Sigmoid colon (tissue), 7 donors: ENCODE measurements at regions of chr13 and their contacts with region 1.

Region 1: DNA sequence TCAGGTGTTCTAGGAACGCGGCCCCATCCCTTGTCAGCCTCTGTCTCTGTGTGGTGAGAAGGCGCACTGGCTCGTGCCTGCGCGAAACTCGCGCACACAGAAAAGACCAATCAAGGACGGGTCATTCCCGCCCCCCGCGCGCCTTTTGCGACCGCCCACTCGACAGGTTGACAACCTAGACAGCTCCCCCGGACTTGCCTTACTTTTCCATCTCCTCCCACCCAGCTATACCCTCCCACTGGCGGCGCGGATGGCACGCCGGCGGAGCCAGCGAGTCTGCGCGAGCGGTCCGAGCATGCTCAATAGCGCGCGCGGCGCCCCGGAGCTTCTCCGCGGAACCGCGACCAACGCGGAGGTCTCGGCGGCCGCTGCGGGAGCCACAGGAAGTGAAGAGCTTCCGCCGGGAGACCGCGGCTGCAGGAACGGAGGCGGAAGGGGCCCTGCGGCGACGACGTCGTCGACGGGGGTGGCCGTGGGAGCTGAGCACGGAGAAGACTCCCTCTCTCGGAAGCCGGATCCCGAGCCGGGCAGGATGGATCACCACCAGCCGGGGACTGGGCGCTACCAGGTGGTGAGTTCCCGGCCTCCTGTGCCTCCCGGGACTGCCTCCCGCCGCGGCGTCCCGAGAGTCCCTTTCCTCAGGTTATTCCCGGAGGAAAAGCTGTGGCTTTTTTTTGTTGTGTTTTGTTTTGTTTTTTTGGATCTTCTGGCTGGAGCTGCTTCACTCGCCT is at the start of gene NDFIP2:
- DNase-seq: peak; percentile 88
- H3K4me3 ChIP-seq: peak within 1 kb of the TSS; percentile 71 to 81 (median 77)
- H3K27ac ChIP-seq: peak within 1 kb of the TSS; percentile 77 to 79 (median 78)
- H3K4me1 ChIP-seq: peaks cover 0 to 21% (median 15%) of the 10 kb centered on the region in 4 donors
- H3K27me3 ChIP-seq: no peaks in the 10 kb centered on the region
- CTCF ChIP-seq: no peak
- EP300 ChIP-seq: no peak
- POLR2A ChIP-seq: peak in 1 of 2 donors; percentile 29
- total RNA-seq, gene NDFIP2: 9.2 to 13.7 (median 10.8) TPM

Region 2: GRCh38 chr13:79079351-79080105 is 401.6 kb before region 1 on chr13:
- intact Hi-C with region 1: no loop called
- DNase-seq: no peak
- H3K4me3 ChIP-seq: no peak overlapping the region
- H3K27ac ChIP-seq: no peak overlapping the region
- H3K4me1 ChIP-seq: no peaks in the 10 kb centered on the region
- H3K27me3 ChIP-seq: no peaks in the 10 kb centered on the region
- CTCF ChIP-seq: no peak
- EP300 ChIP-seq: no peak
- POLR2A ChIP-seq: no peak

Region 3: GRCh38 chr13:79423801-79424642 is 57.1 kb before region 1 on chr13:
- intact Hi-C with region 1: loop called (anchors 5 kb)
- DNase-seq: no peak
- H3K4me3 ChIP-seq: no peak overlapping the region
- H3K27ac ChIP-seq: no peak overlapping the region
- H3K4me1 ChIP-seq: no peaks in the 10 kb centered on the region
- H3K27me3 ChIP-seq: no peaks in the 10 kb centered on the region
- CTCF ChIP-seq: peak; percentile 18 to 56 (median 51)
- EP300 ChIP-seq: no peak
- POLR2A ChIP-seq: no peak

Region 4: GRCh38 chr13:79435561-79435990 is 45.5 kb before region 1 on chr13:
- intact Hi-C with region 1: no loop called
- DNase-seq: no peak
- H3K4me3 ChIP-seq: no peak overlapping the region
- H3K27ac ChIP-seq: no peak overlapping the region
- H3K4me1 ChIP-seq: no peaks in the 10 kb centered on the region
- H3K27me3 ChIP-seq: no peaks in the 10 kb centered on the region
- CTCF ChIP-seq: no peak
- EP300 ChIP-seq: no peak
- POLR2A ChIP-seq: no peak

Region 5: DNA sequence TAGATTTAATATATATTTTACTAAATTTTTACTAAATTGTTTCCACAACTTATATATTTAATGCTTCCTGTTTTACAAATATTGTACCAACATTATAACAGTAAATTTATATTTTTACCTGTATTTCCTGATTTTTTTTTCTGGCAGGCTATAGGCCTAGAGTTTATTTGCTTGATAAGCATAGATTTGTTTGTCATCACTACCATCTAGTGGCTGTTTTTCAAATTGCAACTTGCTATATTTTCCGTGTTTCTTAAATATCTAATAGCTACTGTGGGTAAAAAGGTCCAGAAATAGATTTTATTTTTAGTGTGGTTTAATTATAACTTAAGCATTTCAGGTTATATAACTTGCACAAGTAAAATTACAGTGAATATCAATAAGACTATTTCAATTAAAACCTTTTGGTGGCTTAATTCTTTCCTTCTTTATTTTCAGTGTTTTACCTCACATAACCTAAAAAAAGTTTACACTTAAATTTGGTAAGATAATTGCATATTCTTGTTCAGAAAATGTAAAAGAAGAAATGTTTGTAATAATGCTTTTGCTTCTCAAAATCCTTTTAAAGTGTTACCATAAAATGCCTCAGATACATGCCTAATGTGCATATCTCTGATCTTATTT is 60.4 kb after region 1 on chr13:
- intact Hi-C with region 1: loop called (anchors 5 kb)
- DNase-seq: no peak
- H3K4me3 ChIP-seq: no peak overlapping the region
- H3K27ac ChIP-seq: no peak overlapping the region
- H3K4me1 ChIP-seq: no peaks in the 10 kb centered on the region
- H3K27me3 ChIP-seq: no peaks in the 10 kb centered on the region
- CTCF ChIP-seq: peak in 3 of 4 experiments; percentile 63 to 76 (median 74)
- EP300 ChIP-seq: no peak
- POLR2A ChIP-seq: no peak